HCT116 (cell line): ENCODE measurements at regions of chr4 and their contacts with region 1.

Region 1: DNA sequence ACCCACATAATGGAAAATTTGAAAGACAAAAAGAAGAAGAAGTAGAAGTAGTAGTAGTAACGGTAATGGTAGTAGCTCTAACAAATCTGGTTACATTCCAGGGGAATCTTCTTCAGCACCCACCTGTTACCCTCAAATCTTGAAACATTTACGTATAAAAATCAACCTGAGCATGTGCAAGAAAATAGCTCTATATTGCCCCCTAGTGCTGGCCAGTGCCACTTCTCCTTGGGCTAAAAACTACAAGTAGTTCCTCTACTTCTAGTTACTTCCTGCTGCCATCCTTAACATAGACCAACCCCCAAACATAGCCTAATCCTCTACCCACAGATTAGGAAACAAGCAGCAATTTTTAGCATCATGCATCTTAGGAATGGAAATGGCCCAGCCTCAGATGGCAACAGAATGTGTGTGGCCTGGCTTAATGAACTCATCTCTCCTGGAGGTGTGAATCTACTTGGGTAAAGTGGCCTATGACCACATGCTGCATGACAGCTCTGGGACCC is 3.1 kb downstream of the PDGFC start:
- DNase-seq: peak; percentile 62
- ATAC-seq: peak; percentile 52
- H3K4me3 ChIP-seq: no peak overlapping the region
- H3K27ac ChIP-seq: no peak overlapping the region; the same call in 1 of the 2 replicates
- H3K4me1 ChIP-seq: peaks cover 0 to 20% of the 10 kb centered on the region in 2 experiments; a peak in 3 of 4 replicates
- H3K27me3 ChIP-seq: no peaks in the 10 kb centered on the region
- CTCF ChIP-seq: peak; percentile 44 to 82 (median 76); a peak in 5 of 6 replicates
- POLR2A ChIP-seq: no peak
- RAD21 ChIP-seq: peak; percentile 80

Region 2: DNA sequence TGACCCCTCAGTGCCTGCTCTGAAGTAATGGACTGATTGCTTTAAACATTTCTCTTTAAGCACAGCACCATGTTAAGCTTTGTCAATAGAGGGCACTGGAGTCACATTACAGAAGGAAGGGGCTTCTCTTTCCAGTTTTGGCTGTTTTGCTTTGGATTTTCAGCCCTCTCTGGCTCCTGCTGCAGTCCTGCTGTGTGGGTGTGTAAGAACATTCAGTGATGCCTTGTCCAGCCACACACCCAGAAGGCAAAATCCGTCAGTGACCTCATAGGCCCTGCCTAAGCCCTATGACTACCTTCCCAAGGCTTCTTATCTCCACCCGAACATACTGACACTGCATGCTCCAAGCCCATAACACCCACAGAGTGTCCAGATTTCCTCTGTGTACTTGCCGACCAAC is 799.5 kb before region 1 on chr4:
- CTCF ChIA-PET with region 1: no interaction called
- POLR2A ChIA-PET with region 1: no interaction called
- RAD21 ChIA-PET with region 1: no interaction called
- intact Hi-C with region 1: loop called (anchors 5 kb)
- DNase-seq: peak; percentile 19
- ATAC-seq: peak; percentile 81
- H3K4me3 ChIP-seq: no peak overlapping the region
- H3K27ac ChIP-seq: no peak overlapping the region
- H3K4me1 ChIP-seq: no peaks in the 10 kb centered on the region
- H3K27me3 ChIP-seq: no peaks in the 10 kb centered on the region
- CTCF ChIP-seq: peak; percentile 29 to 57 (median 48); a peak in 5 of 6 replicates
- POLR2A ChIP-seq: no peak
- RAD21 ChIP-seq: peak; percentile 70

Region 3: DNA sequence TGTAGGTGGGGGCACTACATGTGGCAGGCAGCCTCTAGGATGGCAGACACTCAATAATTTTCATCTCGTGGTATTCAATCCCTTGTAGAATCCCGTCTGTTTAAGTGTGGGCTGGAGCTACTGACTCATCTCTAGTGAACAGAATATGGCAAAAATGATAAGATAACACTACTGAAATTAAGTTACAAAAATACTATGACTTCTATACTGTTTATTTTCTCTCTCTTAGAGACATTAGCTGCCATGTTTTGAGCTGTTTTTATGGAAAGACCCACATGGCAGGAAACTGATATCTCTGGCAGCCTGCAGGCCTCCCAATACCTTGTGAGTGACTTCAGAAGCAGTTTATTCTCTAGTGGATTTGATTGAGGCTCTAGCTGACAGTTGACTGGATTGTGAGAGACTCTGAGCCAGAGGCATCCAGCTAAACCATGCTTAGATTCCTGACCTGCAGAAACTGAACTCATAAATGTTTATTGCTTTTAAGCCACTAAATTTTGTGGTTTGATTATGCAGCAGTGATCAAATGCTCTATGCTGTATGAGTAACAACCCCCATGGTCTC is 716.1 kb before region 1 on chr4:
- CTCF ChIA-PET with region 1: no interaction called
- POLR2A ChIA-PET with region 1: no interaction called
- RAD21 ChIA-PET with region 1: no interaction called
- intact Hi-C with region 1: no loop called
- DNase-seq: no peak
- ATAC-seq: no peak
- H3K4me3 ChIP-seq: no peak overlapping the region
- H3K27ac ChIP-seq: no peak overlapping the region
- H3K4me1 ChIP-seq: no peaks in the 10 kb centered on the region
- H3K27me3 ChIP-seq: no peaks in the 10 kb centered on the region
- CTCF ChIP-seq: no peak
- POLR2A ChIP-seq: no peak
- RAD21 ChIP-seq: no peak

Region 4: GRCh38 chr4:156294577-156294976 is 674.0 kb before region 1 on chr4:
- CTCF ChIA-PET with region 1: no interaction called
- POLR2A ChIA-PET with region 1: no interaction called
- RAD21 ChIA-PET with region 1: no interaction called
- intact Hi-C with region 1: loop called (anchors 1 kb)
- DNase-seq: peak; percentile 76
- ATAC-seq: peak; percentile 96
- H3K4me3 ChIP-seq: no peak overlapping the region
- H3K27ac ChIP-seq: no peak overlapping the region
- H3K4me1 ChIP-seq: peaks cover 10 to 15% of the 10 kb centered on the region in 2 experiments; a peak in 3 of 4 replicates
- H3K27me3 ChIP-seq: no peaks in the 10 kb centered on the region
- CTCF ChIP-seq: peak; percentile 43 to 56 (median 51); a peak in 5 of 6 replicates
- POLR2A ChIP-seq: no peak
- RAD21 ChIP-seq: peak; percentile 84

Region 5: GRCh38 chr4:156677131-156677531 is 291.4 kb before region 1 on chr4:
- CTCF ChIA-PET with region 1: interaction called, 3 read pairs
- POLR2A ChIA-PET with region 1: no interaction called
- RAD21 ChIA-PET with region 1: no interaction called
- intact Hi-C with region 1: loop called (anchors 5 kb)
- DNase-seq: peak; percentile 64
- ATAC-seq: peak; percentile 80
- H3K4me3 ChIP-seq: no peak overlapping the region
- H3K27ac ChIP-seq: no peak overlapping the region
- H3K4me1 ChIP-seq: peaks cover 0 to 19% of the 10 kb centered on the region in 2 experiments; a peak in 2 of 4 replicates
- H3K27me3 ChIP-seq: no peaks in the 10 kb centered on the region
- CTCF ChIP-seq: peak; percentile 39 to 63 (median 63); a peak in 4 of 6 replicates
- POLR2A ChIP-seq: no peak
- RAD21 ChIP-seq: peak; percentile 82

Region 6: GRCh38 chr4:156691983-156692382 is 276.5 kb before region 1 on chr4:
- CTCF ChIA-PET with region 1: no interaction called
- POLR2A ChIA-PET with region 1: no interaction called
- RAD21 ChIA-PET with region 1: no interaction called
- intact Hi-C with region 1: loop called (anchors 5 kb)
- DNase-seq: no peak
- ATAC-seq: no peak
- H3K4me3 ChIP-seq: no peak overlapping the region
- H3K27ac ChIP-seq: no peak overlapping the region
- H3K4me1 ChIP-seq: no peaks in the 10 kb centered on the region
- H3K27me3 ChIP-seq: no peaks in the 10 kb centered on the region
- CTCF ChIP-seq: no peak
- POLR2A ChIP-seq: no peak
- RAD21 ChIP-seq: no peak

Region 7: DNA sequence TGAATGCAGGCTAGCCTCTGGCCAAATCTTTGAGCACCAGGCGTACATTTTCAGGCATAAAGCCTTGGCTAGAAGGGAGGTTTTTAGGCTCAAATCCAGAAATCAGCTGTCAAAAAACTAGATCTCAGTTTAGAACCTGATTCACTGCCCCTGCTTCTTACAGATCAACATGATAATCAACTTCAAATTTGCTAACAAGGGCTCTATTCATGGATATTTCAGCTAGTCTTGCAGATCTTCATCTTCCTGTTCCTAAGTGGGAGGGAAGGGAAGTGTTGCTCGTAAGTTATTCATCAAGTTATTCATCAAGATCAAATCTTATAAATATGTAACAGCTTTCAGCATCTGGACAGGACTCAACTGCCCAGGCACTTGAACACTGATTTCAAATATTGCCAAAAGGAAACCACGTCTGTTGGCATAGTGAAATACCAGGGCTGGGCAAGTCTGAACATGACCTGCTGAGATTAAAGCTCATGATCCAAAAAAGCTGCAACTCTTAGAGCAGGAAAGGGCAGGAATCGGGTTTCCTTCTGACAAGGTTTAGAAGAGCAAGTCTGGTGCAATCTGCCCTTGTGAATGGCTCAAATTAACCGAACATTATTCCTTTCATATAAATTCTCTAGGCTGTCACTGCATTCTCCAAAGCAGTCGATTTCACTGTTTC is 197.2 kb before region 1 on chr4:
- CTCF ChIA-PET with region 1: no interaction called
- POLR2A ChIA-PET with region 1: no interaction called
- RAD21 ChIA-PET with region 1: no interaction called
- intact Hi-C with region 1: loop called (anchors 10 kb)
- DNase-seq: peak; percentile 51
- ATAC-seq: peak; percentile 73
- H3K4me3 ChIP-seq: peak overlapping the region in 1 of 2 experiments; percentile 28; a peak in 2 of 4 replicates
- H3K27ac ChIP-seq: peak overlapping the region; percentile 76
- H3K4me1 ChIP-seq: peaks cover 29 to 53% of the 10 kb centered on the region in 2 experiments
- H3K27me3 ChIP-seq: no peaks in the 10 kb centered on the region
- CTCF ChIP-seq: no peak
- POLR2A ChIP-seq: no peak
- RAD21 ChIP-seq: no peak

Region 8: DNA sequence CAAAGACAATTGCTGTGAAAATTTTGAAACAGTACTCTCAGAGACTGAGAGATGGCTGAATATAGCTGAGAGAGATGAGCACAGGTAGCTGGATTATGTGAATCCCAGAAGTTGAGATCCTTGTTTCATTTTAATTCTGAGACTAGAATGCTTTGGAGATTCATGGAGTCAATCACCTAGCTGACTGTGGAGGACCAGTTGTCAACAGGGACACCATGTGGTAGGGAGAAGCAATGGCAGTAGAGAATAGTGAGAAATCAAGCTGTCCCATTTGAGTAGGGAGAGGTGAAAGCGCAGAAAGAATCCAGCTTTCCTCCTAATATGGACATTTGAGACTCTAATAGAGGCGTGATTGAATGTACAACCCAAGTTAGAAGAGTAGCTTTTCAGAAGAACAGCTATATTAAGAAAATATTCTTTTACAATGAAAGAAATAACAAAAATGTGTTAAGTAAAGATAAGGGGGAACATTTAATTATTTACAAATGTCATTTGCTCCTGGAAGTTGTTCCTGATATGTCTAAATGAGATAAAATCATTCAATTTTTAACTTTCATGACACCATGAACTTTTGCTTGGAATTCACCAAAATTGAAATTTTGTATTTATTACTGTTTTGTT is 77.1 kb after region 1 on chr4:
- CTCF ChIA-PET with region 1: interaction called, 9 read pairs
- POLR2A ChIA-PET with region 1: no interaction called
- RAD21 ChIA-PET with region 1: interaction called in 1 of 2 experiments, 3 read pairs
- intact Hi-C with region 1: loop called (anchors 5 kb)
- DNase-seq: peak; percentile 46
- ATAC-seq: peak; percentile 95
- H3K4me3 ChIP-seq: no peak overlapping the region
- H3K27ac ChIP-seq: no peak overlapping the region
- H3K4me1 ChIP-seq: no peaks in the 10 kb centered on the region
- H3K27me3 ChIP-seq: no peaks in the 10 kb centered on the region
- CTCF ChIP-seq: peak; percentile 67 to 79 (median 70)
- POLR2A ChIP-seq: no peak
- RAD21 ChIP-seq: peak; percentile 82

Region 9: GRCh38 chr4:157291071-157291470 is 322.5 kb after region 1 on chr4:
- CTCF ChIA-PET with region 1: no interaction called
- POLR2A ChIA-PET with region 1: no interaction called
- RAD21 ChIA-PET with region 1: no interaction called
- intact Hi-C with region 1: no loop called
- DNase-seq: no peak
- ATAC-seq: no peak
- H3K4me3 ChIP-seq: no peak overlapping the region
- H3K27ac ChIP-seq: no peak overlapping the region
- H3K4me1 ChIP-seq: no peaks in the 10 kb centered on the region
- H3K27me3 ChIP-seq: no peaks in the 10 kb centered on the region
- CTCF ChIP-seq: no peak
- POLR2A ChIP-seq: no peak
- RAD21 ChIP-seq: peak; percentile 30; the same call in 1 of the 2 replicates